ENCODE measurements at regions of chr20 and their contacts with region 1.

Region 1: DNA sequence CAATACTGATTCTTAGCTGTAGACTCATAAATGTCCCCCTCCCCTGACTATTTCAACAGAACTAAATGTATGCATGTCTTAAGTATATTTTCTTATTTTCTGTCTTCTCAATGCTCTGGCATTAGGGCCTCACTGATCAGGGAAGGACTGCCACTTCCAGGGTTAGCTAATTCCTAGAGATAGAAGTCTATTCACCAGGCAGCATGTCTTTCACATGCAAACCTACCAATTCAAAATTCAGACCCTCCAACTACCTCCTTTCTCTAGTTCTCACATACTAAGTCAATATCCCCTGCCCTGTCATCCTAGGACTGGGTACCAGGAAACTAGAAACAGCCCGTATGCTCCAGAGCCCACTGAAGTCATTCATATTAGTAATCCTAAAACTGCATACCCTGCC is 132.3 kb downstream of the RALGAPA2 start:
- DNase-seq: no peak
- ATAC-seq: no peak
- H3K4me3 Mint-ChIP-seq: no peak overlapping the region
- H3K27ac Mint-ChIP-seq: no peak overlapping the region
- H3K4me1 Mint-ChIP-seq: peaks cover 5% of the 10 kb centered on the region
- H3K27me3 Mint-ChIP-seq: no peaks in the 10 kb centered on the region

Region 2: DNA sequence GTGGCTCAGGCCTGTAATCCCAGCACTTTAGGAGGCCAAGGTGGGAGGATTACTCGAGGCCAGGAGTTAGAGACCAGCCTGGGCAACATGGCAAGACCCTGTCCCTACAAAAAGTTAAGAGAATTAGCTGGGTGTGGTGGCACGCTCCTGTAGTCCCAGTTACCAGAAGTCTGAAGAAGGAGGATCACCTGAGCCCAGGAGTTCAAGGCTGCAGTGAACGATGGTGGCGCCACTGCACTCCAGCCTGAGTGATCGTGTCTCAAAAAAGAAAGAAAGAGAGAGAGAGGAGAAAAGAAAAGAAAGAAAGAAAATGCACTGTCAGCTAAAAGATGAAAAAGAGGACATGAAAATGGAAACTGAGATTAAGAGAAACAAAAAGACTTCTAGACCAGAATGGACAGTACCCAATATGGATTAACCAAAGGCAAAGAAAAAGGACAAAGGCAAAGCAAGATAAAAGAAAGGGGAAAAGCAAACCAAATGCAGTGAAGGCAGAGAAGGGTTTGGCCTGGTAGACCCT is 141.3 kb after region 1 on chr20:
- CTCF ChIA-PET with region 1: no interaction called
- POLR2A ChIA-PET with region 1: interaction called, 14 read pairs
- intact Hi-C with region 1: no loop called
- DNase-seq: no peak
- ATAC-seq: no peak
- H3K4me3 Mint-ChIP-seq: no peak overlapping the region
- H3K27ac Mint-ChIP-seq: no peak overlapping the region
- H3K4me1 Mint-ChIP-seq: no peaks in the 10 kb centered on the region
- H3K27me3 Mint-ChIP-seq: no peaks in the 10 kb centered on the region

Region 3: DNA sequence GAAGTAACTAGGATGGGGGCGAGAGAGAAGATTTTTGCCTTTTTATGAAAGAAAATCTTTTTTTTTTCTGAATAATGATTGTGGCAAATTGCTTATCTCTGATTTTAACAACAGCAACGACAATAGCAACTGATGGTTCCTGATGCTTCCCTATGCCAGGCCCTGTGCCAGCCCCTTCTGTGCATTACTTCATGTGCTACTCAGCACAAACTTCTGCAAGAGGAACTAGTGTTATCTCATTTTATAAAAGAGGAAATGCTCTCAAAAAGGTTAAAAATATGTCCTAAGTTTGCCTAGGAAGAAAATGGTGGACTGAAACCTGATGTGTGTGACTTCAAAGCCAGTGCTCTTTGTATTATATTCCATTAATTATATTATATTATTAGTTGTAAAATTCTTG is 206.3 kb after region 1 on chr20:
- CTCF ChIA-PET with region 1: no interaction called
- POLR2A ChIA-PET with region 1: no interaction called
- intact Hi-C with region 1: no loop called
- DNase-seq: no peak
- ATAC-seq: no peak
- H3K4me3 Mint-ChIP-seq: no peak overlapping the region
- H3K27ac Mint-ChIP-seq: no peak overlapping the region
- H3K4me1 Mint-ChIP-seq: no peaks in the 10 kb centered on the region
- H3K27me3 Mint-ChIP-seq: peaks cover 8% of the 10 kb centered on the region

Region 4: DNA sequence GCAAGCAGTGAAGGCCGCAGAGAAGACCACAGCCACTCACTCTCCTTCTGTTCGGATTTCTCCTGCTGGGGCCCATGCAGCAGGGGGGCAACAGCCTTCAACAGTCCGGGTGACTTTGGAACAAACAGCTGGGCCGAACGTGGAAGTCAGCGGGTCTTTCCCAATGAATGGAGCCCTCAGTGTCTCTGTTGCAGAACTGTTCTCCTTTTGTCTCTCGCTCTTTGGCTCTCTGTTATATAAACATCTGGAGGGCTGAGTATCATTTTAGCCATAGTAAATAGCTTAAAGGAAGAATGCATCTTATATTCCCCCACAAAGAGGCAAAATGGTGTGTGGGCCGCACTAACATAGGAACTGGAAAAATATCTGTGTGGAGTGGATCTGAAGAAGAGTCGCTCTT is 269.0 kb after region 1 on chr20:
- CTCF ChIA-PET with region 1: no interaction called
- POLR2A ChIA-PET with region 1: no interaction called
- intact Hi-C with region 1: no loop called
- DNase-seq: no peak
- ATAC-seq: no peak
- H3K4me3 Mint-ChIP-seq: no peak overlapping the region
- H3K27ac Mint-ChIP-seq: no peak overlapping the region
- H3K4me1 Mint-ChIP-seq: no peaks in the 10 kb centered on the region
- H3K27me3 Mint-ChIP-seq: peaks cover 5% of the 10 kb centered on the region